ENCODE measurements at regions of chr17 and their contacts with region 1.

Region 1: DNA sequence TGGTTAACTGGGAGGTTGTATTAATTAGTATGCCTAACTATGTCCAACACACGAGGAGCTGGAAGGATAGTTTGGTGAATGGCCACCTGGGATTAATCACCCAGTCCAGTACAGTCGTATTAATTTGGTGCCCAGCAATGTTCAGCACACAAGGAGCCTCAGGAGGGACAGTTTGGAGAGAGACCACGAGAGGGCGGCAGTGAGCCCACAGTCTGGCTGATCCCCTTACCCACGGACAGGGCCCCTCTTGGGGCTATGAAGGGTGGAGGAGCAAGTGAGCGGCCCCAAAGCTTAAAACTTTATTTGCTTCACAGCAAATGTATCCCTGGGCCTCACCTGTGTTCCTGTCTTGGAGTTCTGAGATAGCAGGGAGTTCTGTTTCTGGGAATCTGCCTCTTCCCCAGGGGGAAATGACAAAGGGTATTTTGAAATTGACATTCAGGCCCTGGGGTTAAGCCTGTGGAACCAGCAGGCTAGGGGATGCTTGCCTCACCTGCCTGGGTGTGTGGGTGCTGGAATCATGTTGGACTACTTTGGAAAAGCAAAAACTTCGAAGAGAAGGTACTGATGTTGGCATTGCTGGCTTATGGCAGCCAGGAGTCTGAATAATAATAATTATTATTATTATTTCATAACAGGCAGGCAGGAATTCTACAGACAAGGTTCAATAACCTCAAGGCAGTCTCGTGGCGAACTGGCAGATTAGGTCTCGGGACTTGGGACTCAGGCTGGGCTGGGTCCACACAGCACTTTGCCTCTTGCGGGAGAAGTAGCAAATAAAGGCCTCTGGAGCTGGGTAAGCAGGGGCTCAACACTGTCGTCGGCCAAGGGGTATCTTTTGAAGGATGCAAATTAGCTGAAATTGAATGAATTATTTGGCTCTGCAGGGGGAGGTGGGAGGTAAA is 227.6 kb upstream of the ASIC2 start:
- DNase-seq: peak; percentile 52
- ATAC-seq: peak in 1 of 2 donors; percentile 64

Region 2: GRCh38 chr17:33436321-33436720 is 84.4 kb before region 1 on chr17:
- intact Hi-C with region 1: no loop called
- DNase-seq: no peak
- ATAC-seq: peak in 1 of 2 donors; percentile 81

Region 3: GRCh38 chr17:33647956-33648355 is 127.3 kb after region 1 on chr17:
- intact Hi-C with region 1: loop called in 1 of 2 experiments (anchors 10 kb)
- DNase-seq: no peak
- ATAC-seq: peak in 1 of 2 donors; percentile 57

Region 4: DNA sequence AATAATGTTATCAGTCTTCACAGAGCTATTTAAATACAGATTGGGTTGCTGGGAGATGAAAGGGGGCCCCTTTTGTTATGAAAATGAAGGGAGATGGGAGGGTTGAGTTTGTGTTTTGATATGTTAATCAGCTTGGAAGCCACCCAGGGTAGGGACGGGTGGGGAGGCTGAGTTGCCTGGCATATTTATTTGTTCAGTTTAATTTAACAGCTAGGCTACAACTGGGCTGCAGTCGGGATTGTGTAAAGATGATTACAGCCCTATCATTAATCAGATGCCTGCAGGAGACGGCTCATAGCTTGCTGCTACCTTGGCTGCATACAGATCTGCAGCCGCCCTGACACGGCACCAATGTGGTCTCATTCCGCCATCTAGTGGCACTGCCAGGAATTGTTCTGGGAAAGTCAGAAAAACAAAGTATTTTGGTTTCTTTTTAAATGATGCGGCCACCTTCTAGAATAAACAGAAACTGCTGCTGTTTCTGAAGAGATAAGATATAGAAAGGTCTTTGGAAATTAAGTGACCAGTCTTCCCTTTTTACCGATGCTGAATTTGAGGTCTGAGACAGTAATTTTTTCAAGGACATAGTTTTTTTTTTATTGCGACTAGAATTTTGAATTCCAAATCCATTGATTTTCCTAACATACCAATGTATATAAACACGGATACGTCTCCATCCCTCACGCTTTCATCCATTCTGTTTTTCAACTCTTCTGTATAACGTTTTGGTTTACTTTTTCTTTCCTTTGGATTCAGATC is 230.4 kb after region 1 on chr17:
- intact Hi-C with region 1: loop called in 1 of 2 experiments (anchors 2 kb)
- DNase-seq: peak; percentile 65
- ATAC-seq: peak; percentile 86 to 96

Measured in left cardiac atrium (tissue), 4 donors.